Naive thymus-derived CD8-positive, alpha-beta T cell (primary cell): ENCODE measurements at regions of chr2 and their contacts with region 1.

Region 1: DNA sequence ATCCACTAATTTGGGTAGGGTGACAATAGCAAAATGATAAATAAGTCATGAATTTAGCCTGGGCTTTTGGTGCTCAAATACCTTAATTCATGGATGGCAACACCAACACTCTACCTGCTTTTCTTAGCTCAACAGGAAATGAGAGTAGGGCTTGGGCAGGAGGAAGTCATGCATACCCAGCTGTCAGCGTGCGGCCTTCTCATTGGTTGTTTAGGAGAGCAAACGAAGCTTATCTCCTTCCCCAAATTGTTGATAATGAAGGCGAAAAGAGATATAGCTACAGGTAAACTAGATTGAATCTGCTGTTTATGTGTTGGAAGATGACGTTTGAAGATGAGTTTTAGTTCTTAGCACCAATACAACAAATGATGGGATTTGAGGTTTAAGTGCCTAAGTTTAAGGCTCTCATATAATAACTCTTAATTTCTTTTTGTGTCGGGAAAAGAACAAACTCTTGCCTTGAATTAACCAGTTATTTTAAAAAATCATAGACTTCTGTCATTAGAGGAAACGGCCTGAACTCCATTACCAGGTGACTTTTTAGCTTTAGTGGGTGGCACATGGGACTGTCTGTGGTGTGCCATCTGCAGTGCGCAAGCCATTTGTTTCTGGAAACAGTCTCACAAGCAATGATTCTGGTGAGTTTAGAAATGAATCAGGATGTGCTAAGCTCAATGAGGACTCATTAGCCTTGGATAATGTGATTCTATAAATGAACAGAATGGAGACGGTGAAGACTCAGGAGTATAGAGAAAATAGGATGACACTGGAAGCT is 19.8 kb downstream of the MAP4K4 start:
- DNase-seq: peak in 7 of 10 donors; percentile 30 to 78 (median 48)
- ATAC-seq: peak; percentile 65 to 72
- H3K4me3 Mint-ChIP-seq: peak overlapping the region; percentile 46 to 81 (median 76)
- H3K27ac Mint-ChIP-seq: peak overlapping the region; percentile 79 to 99 (median 92)
- H3K4me1 Mint-ChIP-seq: peaks cover 35 to 92% (median 83%) of the 10 kb centered on the region in 4 donors
- H3K27me3 Mint-ChIP-seq: no peaks in the 10 kb centered on the region

Region 2: GRCh38 chr2:101697124-101698013 is 19.9 kb before region 1 on chr2 and contains the start of gene MAP4K4:
- POLR2A ChIA-PET with region 1: interaction called, 67 read pairs
- DNase-seq: peak; percentile 57 to 87 (median 66)
- ATAC-seq: peak; percentile 63
- H3K4me3 Mint-ChIP-seq: peak within 1 kb of the TSS in 9 of 10 donors; percentile 85 to 98 (median 95)
- H3K27ac Mint-ChIP-seq: peak within 1 kb of the TSS; percentile 93 to 97 (median 96)
- H3K4me1 Mint-ChIP-seq: peaks cover 19 to 42% (median 28%) of the 10 kb centered on the region in 4 donors
- H3K27me3 Mint-ChIP-seq: no peaks in the 10 kb centered on the region
- polyA plus RNA-seq, gene MAP4K4: 9.5 to 26.6 (median 13.0) TPM

Region 3: DNA sequence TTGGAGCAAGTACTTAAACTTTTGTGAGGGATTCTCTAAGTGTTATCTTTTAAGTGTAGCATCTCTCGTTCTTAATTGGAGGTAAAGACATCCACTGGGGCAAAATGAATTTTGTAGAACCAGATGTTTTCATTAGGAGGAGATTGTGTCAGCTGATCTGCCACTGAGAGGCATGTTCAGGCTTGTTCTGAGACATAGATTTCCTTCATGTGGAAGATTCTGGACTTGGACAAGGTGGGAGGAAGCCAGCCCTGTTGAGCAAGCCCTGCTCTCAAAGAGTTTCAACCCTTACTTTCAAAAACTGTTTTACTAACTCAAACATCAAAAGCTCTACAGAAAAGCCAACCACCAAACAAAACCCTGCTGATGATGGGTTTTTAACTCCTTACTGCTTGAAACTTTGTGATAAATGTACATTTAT is 13.2 kb before region 1 on chr2:
- POLR2A ChIA-PET with region 1: interaction called, 67 read pairs
- DNase-seq: peak in 4 of 10 donors; percentile 17 to 64 (median 44)
- ATAC-seq: peak; percentile 47
- H3K4me3 Mint-ChIP-seq: peak overlapping the region; percentile 74 to 88 (median 85)
- H3K27ac Mint-ChIP-seq: peak overlapping the region in 9 of 10 donors; percentile 88 to 98 (median 95)
- H3K4me1 Mint-ChIP-seq: peaks cover 0 to 79% (median 59%) of the 10 kb centered on the region in 4 donors
- H3K27me3 Mint-ChIP-seq: no peaks in the 10 kb centered on the region

Region 4: GRCh38 chr2:101729521-101730190 is 12.4 kb after region 1 on chr2:
- POLR2A ChIA-PET with region 1: interaction called, 13 read pairs
- DNase-seq: peak in 5 of 10 donors; percentile 6 to 51 (median 32)
- ATAC-seq: peak; percentile 80 to 84
- H3K4me3 Mint-ChIP-seq: peak overlapping the region; percentile 43 to 85 (median 76)
- H3K27ac Mint-ChIP-seq: peak overlapping the region; percentile 86 to 99 (median 90)
- H3K4me1 Mint-ChIP-seq: peaks cover 47 to 96% (median 78%) of the 10 kb centered on the region in 4 donors
- H3K27me3 Mint-ChIP-seq: no peaks in the 10 kb centered on the region